ENCODE measurements at regions of chr15 and their contacts with region 1.

Region 1: GRCh38 chr15:57861036-57861638 is 154.6 kb downstream of the POLR2M start:
- DNase-seq: no peak
- ATAC-seq: no peak

Region 2: GRCh38 chr15:57751177-57751800 is 109.8 kb before region 1 on chr15:
- intact Hi-C with region 1: loop called (anchors 1 kb)
- DNase-seq: no peak
- ATAC-seq: peak; percentile 56

Region 3: DNA sequence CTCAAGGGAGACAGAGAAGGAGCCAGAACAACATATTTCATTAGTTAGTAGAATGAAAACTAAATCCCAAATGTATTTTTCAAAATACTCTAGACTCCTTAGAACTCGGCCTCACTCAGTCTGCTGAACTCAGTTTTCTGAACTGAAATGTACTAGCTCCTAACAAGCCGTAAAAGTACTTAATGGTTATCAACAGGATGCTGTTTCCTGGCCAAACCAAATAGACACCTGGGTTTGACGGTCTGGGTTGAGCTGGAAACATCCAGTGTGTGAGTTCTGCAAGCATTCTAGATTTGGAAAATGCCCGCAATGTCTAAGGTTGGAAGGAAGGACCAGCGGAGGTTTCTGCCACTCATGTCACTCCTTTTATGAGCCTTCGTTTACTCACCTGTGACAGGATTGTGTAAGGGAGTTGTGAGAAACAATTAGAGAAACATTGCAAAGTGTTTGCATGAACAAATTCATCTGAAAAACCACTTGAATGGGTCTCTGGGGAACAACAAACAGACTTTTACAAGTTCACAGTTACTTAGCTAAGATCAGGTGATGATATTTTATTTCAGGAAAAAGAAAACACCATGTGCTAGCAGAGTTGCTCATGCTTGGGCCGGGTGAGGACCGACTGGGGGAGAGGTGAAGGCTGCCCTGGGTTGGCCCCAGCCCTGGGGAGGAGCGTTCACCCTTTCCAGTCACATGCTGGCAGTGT is 53.4 kb after region 1 on chr15:
- intact Hi-C with region 1: loop called (anchors 2 kb)
- DNase-seq: peak; percentile 69
- ATAC-seq: no peak

Measured in Right ventricle myocardium inferior (tissue), 1 donor.